BJ (cell line): ENCODE measurements at regions of chr9 and their contacts with region 1.

Region 1: GRCh38 chr9:84697509-84698114 is 28.1 kb downstream of the NTRK2 start:
- DNase-seq: no peak
- H3K4me3 ChIP-seq: no peak overlapping the region
- H3K27me3 ChIP-seq: peaks cover 1% of the 10 kb centered on the region; the same call in 1 of the 2 replicates
- CTCF ChIP-seq: peak; percentile 88

Region 2: DNA sequence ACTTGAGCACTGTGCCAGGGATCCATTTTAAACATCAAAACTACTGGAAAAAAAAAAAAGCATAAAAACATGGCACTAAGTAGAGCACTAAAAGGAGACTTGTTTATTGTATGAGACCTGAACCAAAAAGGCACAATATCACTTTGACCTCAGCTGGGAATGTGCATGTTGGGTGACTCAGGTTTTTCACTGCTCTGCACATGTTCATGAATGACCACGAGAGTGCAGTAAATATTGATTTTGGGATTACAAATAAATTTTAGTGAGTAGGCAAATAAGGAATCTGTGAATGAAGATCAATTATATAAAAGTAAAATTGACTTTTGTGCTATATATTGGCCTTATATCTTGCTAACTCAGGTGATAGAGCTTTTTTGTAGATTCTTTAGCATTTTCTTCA is 705.2 kb before region 1 on chr9:
- CTCF ChIA-PET with region 1: no interaction called
- POLR2A ChIA-PET with region 1: no interaction called
- DNase-seq: no peak
- H3K4me3 ChIP-seq: no peak overlapping the region
- H3K27me3 ChIP-seq: no peaks in the 10 kb centered on the region
- CTCF ChIP-seq: no peak

Region 3: GRCh38 chr9:84554069-84554664 is 143.4 kb before region 1 on chr9:
- CTCF ChIA-PET with region 1: no interaction called
- POLR2A ChIA-PET with region 1: no interaction called
- DNase-seq: no peak
- H3K4me3 ChIP-seq: no peak overlapping the region
- H3K27me3 ChIP-seq: no peaks in the 10 kb centered on the region
- CTCF ChIP-seq: no peak

Region 4: DNA sequence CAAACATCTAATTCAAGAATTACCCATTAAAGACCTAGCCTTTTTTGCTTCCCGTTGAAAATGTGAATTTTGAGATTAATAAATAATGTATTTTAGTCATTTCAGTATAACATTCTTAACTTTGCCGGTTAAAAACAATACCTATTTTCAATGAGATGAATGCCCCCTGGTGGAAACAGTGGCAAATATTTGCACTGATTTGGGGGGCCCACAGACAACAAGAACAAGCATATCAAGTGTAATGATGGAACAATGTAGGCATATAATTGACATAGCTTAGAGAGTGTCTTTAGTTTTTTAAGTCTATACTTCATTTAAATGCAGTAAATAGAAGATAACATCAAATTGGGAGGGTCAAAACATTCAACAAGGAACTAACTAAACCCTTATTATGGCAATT is 83.8 kb after region 1 on chr9:
- CTCF ChIA-PET with region 1: interaction called, 56 read pairs
- POLR2A ChIA-PET with region 1: no interaction called
- DNase-seq: no peak
- H3K4me3 ChIP-seq: no peak overlapping the region
- H3K27me3 ChIP-seq: no peaks in the 10 kb centered on the region; the same call in none of the 2 replicates
- CTCF ChIP-seq: peak; percentile 31

Region 5: GRCh38 chr9:84953797-84954705 is 256.4 kb after region 1 on chr9:
- CTCF ChIA-PET with region 1: interaction called, 46 read pairs
- POLR2A ChIA-PET with region 1: no interaction called
- DNase-seq: no peak
- H3K4me3 ChIP-seq: no peak overlapping the region
- H3K27me3 ChIP-seq: no peaks in the 10 kb centered on the region; the same call in 1 of the 2 replicates
- CTCF ChIP-seq: peak; percentile 90